ENCODE measurements at regions of chr11 and their contacts with region 1.

Region 1: DNA sequence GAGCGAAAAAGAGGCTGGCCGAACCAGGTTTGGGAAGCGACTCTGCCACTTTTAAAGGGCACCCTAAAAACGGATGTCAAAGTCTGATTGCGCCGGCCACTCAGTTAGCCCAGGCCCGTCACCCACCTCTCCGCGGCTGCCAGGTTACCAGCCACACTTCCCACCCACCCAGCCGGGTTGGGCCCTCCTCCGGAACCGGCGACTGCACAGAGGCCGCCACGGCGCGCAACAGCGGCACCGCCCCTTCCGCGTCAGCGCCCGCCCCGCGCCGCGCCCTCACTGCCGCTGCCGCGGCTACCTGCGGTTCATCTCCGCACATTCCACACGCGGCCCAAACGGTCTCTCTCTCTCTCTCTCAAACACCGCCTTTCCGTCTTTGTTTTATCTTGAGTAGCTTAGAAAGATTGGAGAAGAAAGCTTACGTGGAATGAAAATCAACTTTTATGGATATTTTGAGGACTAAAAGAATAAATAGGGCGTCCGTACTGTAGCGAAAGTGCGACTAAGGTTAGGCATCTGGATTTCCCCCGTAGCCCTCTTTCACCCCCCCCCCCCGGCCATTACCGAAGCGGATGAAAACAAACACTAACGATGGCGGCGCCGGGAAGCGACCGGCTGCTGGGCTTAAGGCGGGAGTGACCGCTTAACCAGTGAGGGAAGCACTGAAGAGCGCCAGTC is at the starts of genes ATG13 and HARBI1:
- DNase-seq: peak; percentile 89 to 95 (median 94)
- ATAC-seq: peak; percentile 96
- H3K4me3 ChIP-seq: peak within 1 kb of the TSS; percentile 99
- H3K4me3 Mint-ChIP-seq: peak within 1 kb of the TSS; percentile 93 to 99 (median 96)
- H3K27ac ChIP-seq: peak within 1 kb of the TSS; percentile 100
- H3K27ac Mint-ChIP-seq: peak within 1 kb of the TSS; percentile 95 to 100 (median 99)
- H3K4me1 ChIP-seq: peaks cover 17 to 27% of the 10 kb centered on the region in 2 donors
- H3K4me1 Mint-ChIP-seq: peaks cover 26 to 53% (median 42%) of the 10 kb centered on the region in 7 donors
- H3K27me3 ChIP-seq: no peaks in the 10 kb centered on the region
- H3K27me3 Mint-ChIP-seq: no peaks in the 10 kb centered on the region
- total RNA-seq, gene ATG13: 70.0 to 114 (median 96.8) TPM
- total RNA-seq, gene HARBI1: 5.8 to 18.1 (median 8.0) TPM

Region 2: DNA sequence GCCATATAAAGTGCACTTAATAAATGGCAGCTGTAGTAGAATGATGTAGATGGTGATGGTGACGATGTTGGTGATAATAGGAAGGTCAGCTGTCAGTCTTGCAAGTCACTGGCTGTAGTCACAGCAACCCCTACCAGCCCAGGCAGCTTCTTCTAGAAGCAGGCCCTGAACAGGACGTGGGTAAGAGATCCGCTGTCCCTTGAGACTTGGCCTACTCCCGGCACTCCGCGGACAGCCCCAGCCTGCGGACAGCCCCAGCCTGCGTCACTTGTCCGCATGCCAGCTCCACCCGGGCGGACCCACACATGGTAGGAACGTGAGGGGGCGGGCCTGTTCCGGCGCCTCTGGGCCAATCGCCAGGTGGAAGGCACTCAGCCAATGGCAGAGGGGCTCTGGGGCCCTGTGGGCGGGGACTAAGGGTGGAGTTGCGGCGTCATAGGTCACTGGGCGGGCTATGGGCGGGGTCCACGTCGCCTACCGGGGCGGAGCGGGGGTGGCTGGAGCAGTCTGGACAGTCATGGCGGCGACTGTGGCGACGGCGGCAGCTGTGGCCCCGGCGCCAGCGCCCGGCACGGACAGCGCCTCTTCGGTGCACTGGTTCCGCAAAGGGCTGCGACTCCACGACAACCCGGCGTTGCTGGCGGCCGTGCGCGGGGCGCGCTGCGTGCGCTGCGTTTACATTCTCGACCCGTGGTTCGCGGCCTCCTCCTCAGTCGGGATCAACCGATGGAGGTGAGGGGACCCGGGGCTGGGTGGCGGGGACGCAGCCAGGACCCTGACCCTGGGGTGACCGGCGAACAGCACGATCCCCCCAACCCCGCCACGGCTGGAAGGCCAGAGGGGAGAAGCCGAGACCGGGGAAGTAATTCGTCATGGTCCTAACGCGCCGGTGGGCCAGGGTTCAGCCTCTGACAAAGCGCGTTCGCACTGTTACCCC is 769.9 kb before region 1 on chr11 and contains the start of gene CRY2:
- CTCF ChIA-PET with region 1: no interaction called
- POLR2A ChIA-PET with region 1: interaction called, 3 read pairs
- intact Hi-C with region 1: loop called in 1 of 2 experiments (anchors 1 kb)
- DNase-seq: peak; percentile 94 to 98 (median 97)
- ATAC-seq: peak; percentile 90
- H3K4me3 ChIP-seq: peak within 1 kb of the TSS; percentile 85
- H3K4me3 Mint-ChIP-seq: peak within 1 kb of the TSS; percentile 78 to 96 (median 90)
- H3K27ac ChIP-seq: peak within 1 kb of the TSS; percentile 91
- H3K27ac Mint-ChIP-seq: peak within 1 kb of the TSS; percentile 89 to 99 (median 96)
- H3K4me1 ChIP-seq: peaks cover 21 to 34% of the 10 kb centered on the region in 2 donors
- H3K4me1 Mint-ChIP-seq: peaks cover 40 to 68% (median 54%) of the 10 kb centered on the region in 7 donors
- H3K27me3 ChIP-seq: no peaks in the 10 kb centered on the region
- H3K27me3 Mint-ChIP-seq: peaks cover 0 to 20% (median 0%) of the 10 kb centered on the region in 5 donors
- total RNA-seq, gene CRY2: 31.1 to 202 (median 66.9) TPM

Region 3: GRCh38 chr11:46017341-46017740 is 599.8 kb before region 1 on chr11:
- CTCF ChIA-PET with region 1: no interaction called
- POLR2A ChIA-PET with region 1: no interaction called
- intact Hi-C with region 1: no loop called
- DNase-seq: no peak
- ATAC-seq: no peak
- H3K4me3 ChIP-seq: no peak overlapping the region
- H3K4me3 Mint-ChIP-seq: no peak overlapping the region
- H3K27ac ChIP-seq: no peak overlapping the region
- H3K27ac Mint-ChIP-seq: no peak overlapping the region
- H3K4me1 ChIP-seq: no peaks in the 10 kb centered on the region
- H3K4me1 Mint-ChIP-seq: peaks cover 0 to 14% (median 4%) of the 10 kb centered on the region in 7 donors
- H3K27me3 ChIP-seq: no peaks in the 10 kb centered on the region
- H3K27me3 Mint-ChIP-seq: no peaks in the 10 kb centered on the region

Region 4: DNA sequence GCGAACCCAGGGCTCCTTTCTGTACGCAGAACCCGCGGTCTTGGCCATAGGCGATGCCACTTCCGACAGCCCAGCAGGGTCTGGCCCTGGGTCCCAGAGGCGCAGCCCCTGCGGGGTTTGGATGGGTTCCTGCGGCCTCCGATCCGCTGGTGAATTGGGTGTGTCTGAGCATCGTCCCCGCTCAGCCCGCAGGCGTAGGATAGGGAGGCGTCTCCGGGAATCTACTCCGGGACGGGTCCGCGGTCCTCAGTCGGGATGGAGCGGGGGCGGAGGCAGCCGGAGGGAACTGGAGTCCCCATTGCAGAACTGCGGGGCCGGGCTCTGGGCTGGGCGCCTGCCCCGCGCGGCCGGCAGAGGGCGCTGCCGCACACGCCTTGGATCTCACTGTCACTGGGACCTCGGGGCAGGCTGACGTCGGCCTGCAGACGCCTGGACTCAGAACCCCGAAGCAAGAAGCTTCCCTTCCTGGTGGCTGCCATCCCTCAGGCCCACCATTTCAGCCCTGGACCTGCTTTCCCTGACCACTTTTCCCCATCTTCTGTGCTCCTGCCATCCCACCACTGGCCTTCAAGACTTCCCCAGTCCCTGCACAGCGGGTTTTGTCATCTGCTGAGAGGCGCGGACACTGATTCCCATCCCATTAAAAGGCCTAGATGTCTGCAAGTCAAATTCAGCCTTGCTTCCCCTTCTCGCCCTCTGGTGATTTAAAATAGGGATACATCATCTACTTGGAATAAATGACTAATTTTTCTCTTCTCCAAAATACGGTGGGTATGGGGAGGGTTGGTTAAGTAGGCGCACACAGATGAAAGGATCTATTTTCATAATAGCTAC is 378.0 kb before region 1 on chr11:
- CTCF ChIA-PET with region 1: interaction called, 3 read pairs
- POLR2A ChIA-PET with region 1: no interaction called
- intact Hi-C with region 1: loop called in 1 of 2 experiments (anchors 1 kb)
- DNase-seq: peak; percentile 62 to 89 (median 78)
- ATAC-seq: peak; percentile 86
- H3K4me3 ChIP-seq: peak overlapping the region; percentile 55
- H3K4me3 Mint-ChIP-seq: peak overlapping the region in 9 of 10 donors; percentile 32 to 79 (median 74)
- H3K27ac ChIP-seq: no peak overlapping the region
- H3K27ac Mint-ChIP-seq: peak overlapping the region in 1 of 9 donors; percentile 43
- H3K4me1 ChIP-seq: peaks cover 12 to 20% of the 10 kb centered on the region in 2 donors
- H3K4me1 Mint-ChIP-seq: peaks cover 18 to 46% (median 31%) of the 10 kb centered on the region in 7 donors
- H3K27me3 ChIP-seq: peaks cover 0 to 4% of the 10 kb centered on the region in 2 donors
- H3K27me3 Mint-ChIP-seq: peaks cover 14 to 28% (median 19%) of the 10 kb centered on the region in 5 donors

Region 5: DNA sequence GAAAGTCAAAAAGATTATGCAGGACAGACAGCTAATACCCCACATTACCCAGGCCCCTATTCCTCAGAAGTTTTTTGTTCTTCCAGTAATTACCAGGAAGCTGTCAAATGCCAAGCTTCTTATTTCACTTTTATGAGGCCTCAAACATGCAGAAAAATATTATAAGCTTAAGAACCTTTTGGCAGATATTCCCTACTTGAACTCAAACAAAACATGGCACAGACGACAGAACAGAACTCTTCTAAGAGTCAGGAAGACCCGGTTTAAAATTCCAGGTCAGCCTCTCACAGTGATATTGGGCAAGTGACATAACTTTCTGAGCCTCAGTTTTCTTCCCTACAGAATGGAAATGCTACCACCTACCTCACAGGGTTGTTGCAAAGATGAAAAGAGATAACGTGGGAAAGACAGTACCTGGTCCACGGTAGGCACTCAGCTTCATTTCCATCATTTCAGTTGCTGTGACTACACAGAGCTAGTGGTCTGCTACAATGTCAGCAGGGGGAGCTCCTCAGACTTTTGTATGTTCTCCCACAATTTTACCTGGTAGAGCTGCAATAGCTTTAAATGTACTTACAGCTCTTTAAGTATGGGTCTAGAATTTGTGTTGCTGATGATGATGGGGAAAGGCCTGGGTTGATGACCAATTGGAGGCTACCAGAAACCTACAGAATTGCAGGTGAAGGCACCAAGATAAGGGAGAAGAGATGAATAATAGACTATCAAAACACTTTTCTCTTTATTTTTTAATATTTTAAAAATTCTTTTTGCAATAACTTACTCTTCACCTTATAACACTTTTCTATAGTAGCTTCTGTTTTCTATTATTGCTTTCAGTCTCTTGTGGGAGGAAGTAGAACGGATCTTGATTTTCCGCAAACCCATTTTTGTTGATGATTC is 127.2 kb before region 1 on chr11:
- CTCF ChIA-PET with region 1: interaction called, 6 read pairs
- POLR2A ChIA-PET with region 1: no interaction called
- intact Hi-C with region 1: loop called (anchors 1 kb)
- DNase-seq: peak in 7 of 9 donors; percentile 10 to 48 (median 27)
- ATAC-seq: peak; percentile 73
- H3K4me3 ChIP-seq: no peak overlapping the region
- H3K4me3 Mint-ChIP-seq: no peak overlapping the region
- H3K27ac ChIP-seq: no peak overlapping the region
- H3K27ac Mint-ChIP-seq: peak overlapping the region in 2 of 9 donors; percentile 32 to 66
- H3K4me1 ChIP-seq: no peaks in the 10 kb centered on the region
- H3K4me1 Mint-ChIP-seq: peaks cover 0 to 21% (median 8%) of the 10 kb centered on the region in 7 donors
- H3K27me3 ChIP-seq: no peaks in the 10 kb centered on the region
- H3K27me3 Mint-ChIP-seq: no peaks in the 10 kb centered on the region

Region 6: DNA sequence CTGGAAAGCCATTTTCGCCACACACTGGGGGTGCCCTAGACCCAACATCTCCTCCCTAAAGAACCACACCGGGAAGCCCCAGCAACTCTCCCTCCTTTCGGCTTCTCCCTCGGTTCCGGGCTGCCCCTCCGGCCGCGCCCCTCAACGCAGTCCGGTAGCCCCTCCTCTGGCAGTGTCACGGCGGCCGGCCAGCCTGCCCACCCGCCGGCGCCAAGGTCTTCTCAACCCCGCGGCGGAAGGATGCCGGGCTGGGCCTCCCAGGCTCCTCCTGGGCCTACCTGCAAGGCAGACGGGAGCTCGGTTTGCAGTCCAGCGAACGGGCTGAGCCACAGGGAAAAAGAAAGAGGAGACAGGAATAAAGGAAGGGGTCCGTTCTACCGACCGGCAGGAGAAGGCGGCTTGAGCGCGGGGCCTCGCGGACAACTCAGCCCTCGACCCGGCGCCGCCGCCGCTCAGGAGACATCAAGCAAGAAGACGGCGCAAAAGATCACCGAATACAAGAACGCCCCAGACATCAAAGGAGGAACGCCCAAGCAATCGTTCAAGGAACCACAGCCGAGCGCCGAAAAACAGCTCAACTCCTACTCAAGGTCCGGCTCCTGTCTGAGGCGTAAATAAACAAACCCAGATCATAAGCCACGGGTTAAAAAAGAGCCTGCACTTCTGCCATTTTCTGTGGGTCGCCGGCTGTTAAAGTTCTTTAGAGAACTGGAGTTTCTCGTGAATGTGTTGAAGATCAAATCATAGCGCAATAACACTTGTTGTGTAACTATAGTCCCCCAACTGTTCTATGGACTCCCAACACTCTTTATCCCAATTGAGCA is 23.4 kb before region 1 on chr11 and contains the start of gene AMBRA1:
- CTCF ChIA-PET with region 1: interaction called, 5 read pairs
- POLR2A ChIA-PET with region 1: interaction called, 21 read pairs
- intact Hi-C with region 1: loop called (anchors 1 kb)
- DNase-seq: peak; percentile 59 to 83 (median 80)
- ATAC-seq: peak; percentile 97
- H3K4me3 ChIP-seq: peak within 1 kb of the TSS; percentile 69
- H3K4me3 Mint-ChIP-seq: peak within 1 kb of the TSS; percentile 90 to 100 (median 97)
- H3K27ac ChIP-seq: peak within 1 kb of the TSS; percentile 84
- H3K27ac Mint-ChIP-seq: peak within 1 kb of the TSS; percentile 92 to 98 (median 96)
- H3K4me1 ChIP-seq: peaks cover 19 to 22% of the 10 kb centered on the region in 2 donors
- H3K4me1 Mint-ChIP-seq: peaks cover 23 to 49% (median 41%) of the 10 kb centered on the region in 7 donors
- H3K27me3 ChIP-seq: no peaks in the 10 kb centered on the region
- H3K27me3 Mint-ChIP-seq: no peaks in the 10 kb centered on the region
- total RNA-seq, gene AMBRA1: 38.1 to 48.7 (median 44.6) TPM

Region 7: DNA sequence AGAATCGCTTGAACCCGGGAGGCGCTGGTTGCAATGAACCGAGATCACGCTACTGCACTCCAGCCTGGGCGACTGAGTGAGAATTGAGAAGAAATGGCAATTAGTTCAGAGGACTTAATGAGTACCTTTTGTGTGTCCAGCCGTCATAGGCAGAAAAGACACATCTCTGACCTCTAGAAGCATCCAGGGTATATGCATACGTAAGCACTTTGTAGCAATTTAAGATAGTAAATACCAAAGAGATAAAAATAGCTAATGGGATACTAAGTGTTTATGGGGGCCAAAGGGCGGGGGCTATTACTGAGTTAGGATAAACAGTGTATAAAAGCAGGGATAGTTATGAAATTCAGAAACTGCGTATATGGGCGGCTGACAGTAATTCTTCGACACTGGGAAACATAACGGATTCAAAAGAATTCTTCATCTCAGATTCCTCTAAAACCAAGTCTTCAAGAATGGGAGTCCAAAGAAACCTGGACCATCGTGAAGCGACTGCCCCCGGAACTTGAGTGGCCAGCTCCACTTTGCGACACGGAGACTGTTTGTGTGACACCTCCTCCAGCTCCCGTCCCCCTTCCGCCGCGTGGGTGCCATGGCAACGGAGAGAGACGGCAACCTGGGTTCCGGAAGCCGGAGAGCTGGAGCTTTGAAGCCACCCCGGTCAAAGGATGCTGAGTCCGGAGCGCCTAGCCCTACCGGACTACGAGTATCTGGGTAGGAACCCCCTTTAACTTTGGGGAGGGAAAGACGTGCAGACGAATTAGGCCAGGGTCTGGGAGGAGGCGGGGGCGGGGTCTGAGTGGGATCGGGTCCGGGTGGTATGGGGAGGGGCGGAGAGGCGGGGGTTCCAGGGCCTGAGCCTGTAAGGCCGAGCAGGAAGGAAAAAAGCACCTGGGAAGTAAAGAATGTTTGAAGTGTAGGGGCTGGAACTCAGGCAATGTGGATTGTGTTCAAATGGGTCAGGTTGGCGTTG is 319.3 kb after region 1 on chr11 and contains the start of gene CSTPP1:
- CTCF ChIA-PET with region 1: no interaction called
- POLR2A ChIA-PET with region 1: no interaction called
- intact Hi-C with region 1: loop called in 1 of 2 experiments (anchors 5 kb)
- DNase-seq: peak; percentile 80 to 92 (median 89)
- ATAC-seq: peak; percentile 99
- H3K4me3 ChIP-seq: peak within 1 kb of the TSS; percentile 76
- H3K4me3 Mint-ChIP-seq: peak within 1 kb of the TSS; percentile 86 to 100 (median 92)
- H3K27ac ChIP-seq: peak within 1 kb of the TSS; percentile 72
- H3K27ac Mint-ChIP-seq: peak within 1 kb of the TSS; percentile 89 to 98 (median 92)
- H3K4me1 ChIP-seq: peaks cover 0 to 11% of the 10 kb centered on the region in 2 donors
- H3K4me1 Mint-ChIP-seq: peaks cover 5 to 24% (median 21%) of the 10 kb centered on the region in 7 donors
- H3K27me3 ChIP-seq: no peaks in the 10 kb centered on the region
- H3K27me3 Mint-ChIP-seq: peaks cover 8 to 19% (median 9%) of the 10 kb centered on the region in 5 donors
- total RNA-seq, gene CSTPP1: 9.3 to 18.6 (median 16.1) TPM

Region 8: GRCh38 chr11:47766305-47767227 is 1149.4 kb after region 1 on chr11:
- CTCF ChIA-PET with region 1: no interaction called
- POLR2A ChIA-PET with region 1: no interaction called
- intact Hi-C with region 1: loop called in 1 of 2 experiments (anchors 1 kb)
- DNase-seq: peak; percentile 60 to 84 (median 79)
- ATAC-seq: peak; percentile 52
- H3K4me3 ChIP-seq: peak overlapping the region; percentile 94
- H3K4me3 Mint-ChIP-seq: peak overlapping the region; percentile 88 to 100 (median 96)
- H3K27ac ChIP-seq: peak overlapping the region; percentile 97
- H3K27ac Mint-ChIP-seq: peak overlapping the region; percentile 96 to 100 (median 99)
- H3K4me1 ChIP-seq: peaks cover 20 to 22% of the 10 kb centered on the region in 2 donors
- H3K4me1 Mint-ChIP-seq: peaks cover 16 to 39% (median 23%) of the 10 kb centered on the region in 7 donors
- H3K27me3 ChIP-seq: no peaks in the 10 kb centered on the region
- H3K27me3 Mint-ChIP-seq: no peaks in the 10 kb centered on the region

Measured in naive thymus-derived CD4-positive, alpha-beta T cell (primary cell).